T-cell (primary cell): ENCODE measurements at regions of chr2 and their contacts with region 1.

Region 1: GRCh38 chr2:100603414-100603813 is 40.6 kb downstream of the PDCL3 start:
- DNase-seq: no peak
- ATAC-seq: no peak
- H3K4me3 ChIP-seq: no peak overlapping the region
- H3K4me3 Mint-ChIP-seq: no peak overlapping the region
- H3K27ac ChIP-seq: no peak overlapping the region
- H3K27ac Mint-ChIP-seq: no peak overlapping the region
- H3K4me1 ChIP-seq: no peaks in the 10 kb centered on the region
- H3K4me1 Mint-ChIP-seq: peaks cover 6 to 10% (median 6%) of the 10 kb centered on the region in 3 donors
- H3K27me3 ChIP-seq: no peaks in the 10 kb centered on the region
- H3K27me3 Mint-ChIP-seq: peaks cover 2 to 5% of the 10 kb centered on the region in 2 donors

Region 2: DNA sequence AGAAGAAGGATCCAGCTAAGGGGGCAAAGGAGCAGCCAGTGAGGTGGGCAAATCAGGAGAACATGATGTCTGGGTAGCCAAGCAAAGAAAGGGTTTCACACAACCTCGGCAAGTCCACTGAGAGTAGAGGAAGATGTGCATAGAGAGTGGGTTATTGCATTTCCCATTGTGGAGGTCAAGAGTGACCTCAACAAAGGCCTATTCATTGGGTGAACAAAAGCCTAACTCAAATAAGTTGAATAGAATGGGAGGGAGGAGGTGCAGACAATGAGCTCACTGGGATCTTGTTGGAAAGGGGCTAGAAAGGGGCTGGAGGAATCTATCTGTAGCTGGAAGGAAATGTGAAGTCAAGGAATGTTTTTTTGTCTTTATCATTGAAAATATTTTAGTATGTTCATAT is 54.6 kb before region 1 on chr2:
- CTCF ChIA-PET with region 1: no interaction called
- POLR2A ChIA-PET with region 1: no interaction called
- DNase-seq: no peak
- ATAC-seq: no peak
- H3K4me3 ChIP-seq: no peak overlapping the region
- H3K4me3 Mint-ChIP-seq: no peak overlapping the region
- H3K27ac ChIP-seq: no peak overlapping the region
- H3K27ac Mint-ChIP-seq: no peak overlapping the region
- H3K4me1 ChIP-seq: no peaks in the 10 kb centered on the region
- H3K4me1 Mint-ChIP-seq: peaks cover 0 to 3% (median 0%) of the 10 kb centered on the region in 3 donors
- H3K27me3 ChIP-seq: peaks cover 0 to 3% of the 10 kb centered on the region in 2 experiments
- H3K27me3 Mint-ChIP-seq: peaks cover 0 to 20% of the 10 kb centered on the region in 2 donors

Region 3: GRCh38 chr2:100580367-100581276 is 22.8 kb before region 1 on chr2:
- CTCF ChIA-PET with region 1: interaction called, 4 read pairs
- POLR2A ChIA-PET with region 1: interaction called in 1 of 2 experiments, 11 read pairs
- DNase-seq: peak; percentile 31 to 84 (median 62)
- ATAC-seq: peak; percentile 86 to 90 (median 88)
- H3K4me3 ChIP-seq: peak overlapping the region in 1 of 2 donors; percentile 7
- H3K4me3 Mint-ChIP-seq: peak overlapping the region; percentile 49 to 66 (median 52)
- H3K27ac ChIP-seq: peak overlapping the region; percentile 92
- H3K27ac Mint-ChIP-seq: peak overlapping the region; percentile 98 to 99
- H3K4me1 ChIP-seq: peaks cover 14 to 41% of the 10 kb centered on the region in 2 experiments
- H3K4me1 Mint-ChIP-seq: peaks cover 33 to 47% (median 44%) of the 10 kb centered on the region in 3 donors
- H3K27me3 ChIP-seq: no peaks in the 10 kb centered on the region
- H3K27me3 Mint-ChIP-seq: no peaks in the 10 kb centered on the region

Region 4: GRCh38 chr2:100630473-100630977 is 27.1 kb after region 1 on chr2:
- CTCF ChIA-PET with region 1: no interaction called
- POLR2A ChIA-PET with region 1: no interaction called
- DNase-seq: peak in 1 of 35 experiments; percentile 27
- ATAC-seq: peak in 3 of 4 experiments; percentile 36 to 73 (median 67)
- H3K4me3 ChIP-seq: no peak overlapping the region
- H3K4me3 Mint-ChIP-seq: peak overlapping the region in 1 of 3 donors; percentile 43
- H3K27ac ChIP-seq: no peak overlapping the region
- H3K27ac Mint-ChIP-seq: peak overlapping the region; percentile 17 to 50
- H3K4me1 ChIP-seq: peaks cover 6 to 17% of the 10 kb centered on the region in 2 experiments
- H3K4me1 Mint-ChIP-seq: peaks cover 22 to 31% (median 27%) of the 10 kb centered on the region in 3 donors
- H3K27me3 ChIP-seq: no peaks in the 10 kb centered on the region
- H3K27me3 Mint-ChIP-seq: no peaks in the 10 kb centered on the region